Natural killer cell (primary cell): ENCODE measurements at regions of chr22 and their contacts with region 1.

Region 1: DNA sequence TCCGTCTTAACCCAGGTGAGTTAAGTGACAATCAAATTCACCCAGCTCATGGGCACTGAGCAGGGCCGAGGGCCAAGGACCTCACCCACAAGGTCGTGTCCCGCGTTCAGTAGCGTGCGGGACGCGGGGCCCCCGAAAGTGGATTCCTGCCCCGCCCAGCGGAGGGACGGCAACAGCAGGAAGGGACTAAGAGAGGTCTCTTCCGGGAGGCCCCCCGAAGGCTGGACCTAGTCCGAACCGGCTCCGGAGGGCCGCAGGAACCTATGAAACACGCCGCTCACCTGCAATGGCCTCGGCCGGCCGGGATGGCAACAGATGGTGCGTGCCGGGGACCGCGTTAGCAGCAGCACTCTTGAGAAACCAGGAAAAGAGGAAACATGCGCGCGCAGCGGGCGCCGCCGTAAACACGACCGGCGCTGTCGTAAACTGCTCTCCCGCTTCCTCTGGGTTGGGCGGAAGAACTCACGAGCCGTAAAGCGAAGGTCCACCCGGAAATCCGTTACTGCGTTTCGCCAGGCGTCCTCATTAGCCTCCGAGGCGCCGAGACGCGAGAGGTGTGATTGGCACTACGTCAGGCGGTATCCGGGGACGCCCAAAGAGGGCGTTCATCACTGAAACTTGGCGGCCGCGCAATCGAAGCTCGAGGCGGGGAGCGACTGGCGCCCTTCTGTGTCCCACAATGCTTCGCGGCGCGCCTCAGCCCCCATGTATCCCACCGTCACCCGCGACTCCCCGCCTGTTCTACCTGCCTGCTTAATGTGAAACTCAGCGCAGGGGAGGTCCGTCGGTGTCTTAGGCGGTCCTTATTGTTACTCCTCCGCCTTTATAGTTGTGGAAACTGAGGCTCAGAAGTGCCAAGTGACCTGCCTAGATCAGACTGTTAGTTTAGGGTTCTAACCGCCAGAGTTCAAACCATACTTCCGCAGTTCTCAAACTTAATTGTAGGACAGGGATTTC is at the start of gene EIF3D:
- DNase-seq: peak; percentile 99 to 100
- ATAC-seq: peak; percentile 90 to 97 (median 91)
- H3K4me3 ChIP-seq: peak within 1 kb of the TSS; percentile 82
- H3K4me3 Mint-ChIP-seq: peak within 1 kb of the TSS; percentile 93
- H3K27ac ChIP-seq: peak within 1 kb of the TSS; percentile 100
- H3K27ac Mint-ChIP-seq: peak within 1 kb of the TSS; percentile 95 to 96
- H3K4me1 ChIP-seq: peaks cover 21% of the 10 kb centered on the region
- H3K4me1 Mint-ChIP-seq: peaks cover 22 to 23% of the 10 kb centered on the region in 2 donors
- H3K27me3 ChIP-seq: no peaks in the 10 kb centered on the region
- H3K27me3 Mint-ChIP-seq: peaks cover 0 to 3% of the 10 kb centered on the region in 2 donors
- CTCF ChIP-seq: no peak
- total RNA-seq, gene EIF3D: 205 to 251 (median 215) TPM

Region 2: GRCh38 chr22:36277482-36278291 is 251.4 kb before region 1 on chr22:
- intact Hi-C with region 1: no loop called
- DNase-seq: peak; percentile 49 to 84
- ATAC-seq: peak; percentile 74 to 98 (median 84)
- H3K4me3 ChIP-seq: no peak overlapping the region
- H3K4me3 Mint-ChIP-seq: no peak overlapping the region
- H3K27ac ChIP-seq: no peak overlapping the region
- H3K27ac Mint-ChIP-seq: peak overlapping the region; percentile 37 to 71
- H3K4me1 ChIP-seq: peaks cover 10% of the 10 kb centered on the region
- H3K4me1 Mint-ChIP-seq: peaks cover 10 to 12% of the 10 kb centered on the region in 2 donors
- H3K27me3 ChIP-seq: no peaks in the 10 kb centered on the region
- H3K27me3 Mint-ChIP-seq: no peaks in the 10 kb centered on the region
- CTCF ChIP-seq: peak; percentile 77

Region 3: DNA sequence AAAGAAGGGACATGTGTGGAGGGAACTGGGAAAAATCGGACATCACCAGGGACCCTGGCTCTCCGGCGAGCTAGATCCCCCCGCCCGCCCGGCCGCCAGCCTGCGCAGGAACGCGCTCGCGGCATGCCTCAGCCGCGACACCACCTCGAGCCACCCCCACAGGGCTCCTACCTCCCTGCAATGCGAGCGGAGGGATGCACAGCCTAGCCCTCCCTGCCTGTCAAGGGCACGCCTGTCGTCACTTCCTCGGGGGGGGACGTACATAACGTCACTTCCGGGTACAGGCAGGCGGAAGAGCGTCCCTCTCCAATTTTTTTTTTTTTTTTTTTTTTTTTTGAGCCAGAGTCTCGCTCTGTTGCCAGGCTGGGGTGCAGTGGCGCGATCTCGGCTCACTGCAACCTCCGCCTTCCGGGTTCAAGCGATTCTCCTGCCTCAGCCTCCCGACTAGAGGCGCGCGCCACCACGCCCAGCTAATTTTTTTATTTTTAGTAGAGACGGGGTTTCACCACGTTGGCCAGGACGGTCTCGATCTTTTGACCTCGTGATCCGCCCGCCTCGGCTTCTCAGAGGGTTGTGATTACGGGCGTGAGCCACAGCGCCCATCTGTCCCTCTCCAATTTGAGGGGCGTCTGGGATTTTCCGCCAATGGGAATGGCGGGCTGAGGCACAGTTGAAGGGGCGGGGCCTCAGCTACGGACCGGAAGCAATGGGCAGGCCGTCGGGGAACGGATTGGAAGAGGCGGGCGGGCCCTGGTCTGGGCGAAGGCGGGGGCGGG is 47.5 kb before region 1 on chr22 and contains the start of gene TXN2:
- intact Hi-C with region 1: loop called (anchors 1 kb)
- DNase-seq: peak; percentile 97 to 99
- ATAC-seq: peak; percentile 82 to 92 (median 82)
- H3K4me3 ChIP-seq: peak within 1 kb of the TSS; percentile 59
- H3K4me3 Mint-ChIP-seq: peak within 1 kb of the TSS; percentile 94
- H3K27ac ChIP-seq: peak within 1 kb of the TSS; percentile 96
- H3K27ac Mint-ChIP-seq: peak within 1 kb of the TSS; percentile 94 to 99
- H3K4me1 ChIP-seq: peaks cover 18% of the 10 kb centered on the region
- H3K4me1 Mint-ChIP-seq: peaks cover 14 to 20% of the 10 kb centered on the region in 2 donors
- H3K27me3 ChIP-seq: no peaks in the 10 kb centered on the region
- H3K27me3 Mint-ChIP-seq: no peaks in the 10 kb centered on the region
- CTCF ChIP-seq: no peak
- total RNA-seq, gene TXN2: 35.5 to 45.4 (median 41.5) TPM

Region 4: DNA sequence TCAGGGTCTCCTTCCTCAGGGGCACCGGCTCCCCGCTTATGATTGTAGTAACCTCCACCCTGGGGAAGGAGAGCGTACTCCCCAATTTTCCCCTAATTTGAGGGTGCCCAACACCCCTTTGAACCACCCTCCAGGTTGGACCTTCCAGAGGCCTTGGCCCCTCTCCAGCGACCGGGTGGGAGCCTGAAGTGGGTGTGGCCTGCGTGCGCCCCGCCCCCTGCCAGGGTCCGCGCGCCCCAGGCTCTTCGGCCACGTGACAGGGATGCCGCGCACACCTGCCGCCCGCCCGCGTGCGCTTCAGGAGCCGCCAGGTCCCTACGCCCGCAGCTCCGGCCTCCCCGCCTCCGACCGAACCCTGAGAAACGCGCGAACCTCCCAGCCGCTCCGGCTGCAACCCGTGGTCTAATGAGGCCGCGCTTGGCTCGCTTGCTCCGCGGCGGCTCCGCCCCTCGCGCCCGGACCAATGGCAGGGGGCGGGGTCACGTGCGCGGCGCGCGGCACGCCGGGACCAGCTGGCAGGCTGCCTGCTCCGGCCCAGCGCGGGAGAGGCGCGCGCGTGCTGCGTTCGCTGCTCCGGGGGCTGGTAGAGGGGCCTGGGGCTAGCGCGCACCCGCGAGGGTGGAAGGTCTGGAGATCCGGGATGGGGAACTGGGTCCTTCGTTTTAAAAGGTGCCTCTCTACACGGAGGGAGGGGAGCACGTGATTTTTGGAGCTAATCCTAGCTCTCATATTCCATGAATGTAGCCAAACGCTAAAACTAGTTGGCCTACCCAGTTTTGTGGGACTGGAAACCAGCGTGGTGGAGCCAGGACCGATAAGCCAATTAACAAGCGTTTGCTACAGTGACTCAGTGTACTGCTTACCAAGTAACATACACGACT is 22.2 kb before region 1 on chr22 and contains the start of gene FOXRED2:
- intact Hi-C with region 1: loop called (anchors 1 kb)
- DNase-seq: peak; percentile 92 to 95
- ATAC-seq: peak; percentile 97 to 98 (median 98)
- H3K4me3 ChIP-seq: peak within 1 kb of the TSS; percentile 43
- H3K4me3 Mint-ChIP-seq: peak within 1 kb of the TSS; percentile 83
- H3K27ac ChIP-seq: peak within 1 kb of the TSS; percentile 27
- H3K27ac Mint-ChIP-seq: peak within 1 kb of the TSS; percentile 6 to 79
- H3K4me1 ChIP-seq: peaks cover 16% of the 10 kb centered on the region
- H3K4me1 Mint-ChIP-seq: peaks cover 8 to 13% of the 10 kb centered on the region in 2 donors
- H3K27me3 ChIP-seq: no peaks in the 10 kb centered on the region
- H3K27me3 Mint-ChIP-seq: no peaks in the 10 kb centered on the region
- CTCF ChIP-seq: no peak
- total RNA-seq, gene FOXRED2: 1.7 to 2.0 (median 1.9) TPM

Region 5: DNA sequence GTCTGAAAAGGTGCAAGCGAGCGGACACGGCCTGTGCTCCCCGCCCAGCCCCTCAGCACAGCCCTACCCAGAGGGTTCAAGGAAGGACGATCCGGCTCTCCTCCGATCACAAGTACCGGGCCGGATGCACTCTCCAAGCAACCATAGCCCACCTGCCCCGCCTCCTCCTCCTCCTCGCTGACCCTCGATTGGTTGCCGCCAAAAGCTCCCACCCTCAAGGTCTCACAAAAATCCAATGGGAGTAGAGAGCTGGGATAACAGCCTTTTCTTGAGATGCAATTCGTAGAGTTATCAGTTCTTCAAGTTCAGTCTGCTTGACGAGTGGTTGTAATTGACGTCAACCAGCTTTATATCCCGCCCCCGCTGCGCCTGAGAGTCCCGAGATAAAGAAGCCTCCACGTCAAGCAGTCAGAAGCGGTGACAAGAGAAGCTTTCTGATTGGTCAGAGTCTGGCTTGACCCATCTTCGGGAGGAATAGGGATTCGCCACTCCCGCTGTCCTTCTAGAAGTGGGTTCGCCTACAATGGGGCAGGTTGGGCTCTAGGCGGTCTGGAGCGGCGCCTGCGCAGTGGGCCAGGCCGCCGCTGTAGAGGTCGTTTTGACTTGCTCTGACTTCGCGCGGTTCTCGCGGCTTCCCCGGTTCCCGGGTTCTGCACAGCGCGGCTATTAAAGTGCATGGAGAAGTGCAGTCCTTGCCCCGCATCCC is 247.0 kb after region 1 on chr22 and contains the start of gene IFT27:
- intact Hi-C with region 1: loop called (anchors 2 kb)
- DNase-seq: peak; percentile 91 to 99
- ATAC-seq: peak; percentile 86 to 96 (median 89)
- H3K4me3 ChIP-seq: peak within 1 kb of the TSS; percentile 63
- H3K4me3 Mint-ChIP-seq: peak within 1 kb of the TSS; percentile 87
- H3K27ac ChIP-seq: peak within 1 kb of the TSS; percentile 78
- H3K27ac Mint-ChIP-seq: peak within 1 kb of the TSS; percentile 92 to 94
- H3K4me1 ChIP-seq: peaks cover 16% of the 10 kb centered on the region
- H3K4me1 Mint-ChIP-seq: peaks cover 19 to 22% of the 10 kb centered on the region in 2 donors
- H3K27me3 ChIP-seq: no peaks in the 10 kb centered on the region
- H3K27me3 Mint-ChIP-seq: no peaks in the 10 kb centered on the region
- CTCF ChIP-seq: no peak
- total RNA-seq, gene IFT27: 16.5 to 30.1 (median 27.1) TPM